ENCODE measurements at regions of chr6 and their contacts with region 1.

Region 1: DNA sequence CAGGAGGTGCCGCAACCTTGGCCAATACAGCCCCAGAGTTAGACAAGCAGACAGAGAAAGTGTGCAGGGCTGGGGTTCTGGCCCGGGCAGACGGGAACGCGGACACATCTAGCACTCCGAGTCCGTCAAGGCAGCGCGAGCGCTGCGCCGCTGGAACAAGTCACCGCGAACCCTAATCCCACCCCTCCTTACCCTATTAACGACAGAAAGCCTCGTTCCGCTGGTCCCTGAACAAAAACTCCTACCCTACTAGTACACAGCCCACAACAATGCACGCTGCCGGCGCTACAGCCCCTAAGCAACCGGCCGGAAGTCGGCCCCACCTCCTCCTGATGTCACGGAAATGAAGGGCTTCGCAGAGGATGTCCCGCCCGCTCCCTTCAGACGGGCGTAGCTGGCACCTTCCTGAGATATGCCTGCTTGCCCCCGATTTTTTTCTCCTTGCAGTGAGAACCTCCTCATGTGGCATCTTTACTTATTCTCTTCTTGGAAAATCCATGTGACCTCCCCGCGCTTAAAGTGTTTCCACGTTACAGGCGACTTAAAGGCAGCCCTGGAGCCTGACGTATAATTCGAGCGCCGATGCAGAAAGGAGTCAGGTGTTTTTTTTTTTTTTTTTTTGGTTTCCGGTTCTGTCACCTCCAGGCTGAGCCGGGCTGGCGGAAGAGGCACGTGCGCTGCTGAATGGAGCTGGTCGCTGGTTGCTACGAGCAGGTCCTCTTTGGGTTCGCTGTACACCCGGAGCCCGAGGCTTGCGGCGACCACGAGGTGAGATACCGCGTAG is at the starts of genes C6orf52 and PAK1IP1:
- DNase-seq: peak; percentile 79 to 90
- H3K4me3 ChIP-seq: peak within 1 kb of the TSS; percentile 98
- H3K27ac ChIP-seq: peak within 1 kb of the TSS; percentile 86
- H3K4me1 ChIP-seq: peaks cover 16% of the 10 kb centered on the region
- H3K27me3 ChIP-seq: no peaks in the 10 kb centered on the region
- CTCF ChIP-seq: no peak
- total RNA-seq, gene C6orf52: 6.1 and 6.2 TPM in 2 replicates
- total RNA-seq, gene PAK1IP1: 14.3 and 15.2 TPM in 2 replicates

Region 2: GRCh38 chr6:10082385-10082784 is 612.1 kb before region 1 on chr6:
- CTCF ChIA-PET with region 1: no interaction called
- POLR2A ChIA-PET with region 1: interaction called, 11 read pairs
- intact Hi-C with region 1: no loop called
- DNase-seq: no peak
- H3K4me3 ChIP-seq: no peak overlapping the region
- H3K27ac ChIP-seq: no peak overlapping the region
- H3K4me1 ChIP-seq: no peaks in the 10 kb centered on the region
- H3K27me3 ChIP-seq: no peaks in the 10 kb centered on the region
- CTCF ChIP-seq: no peak

Region 3: DNA sequence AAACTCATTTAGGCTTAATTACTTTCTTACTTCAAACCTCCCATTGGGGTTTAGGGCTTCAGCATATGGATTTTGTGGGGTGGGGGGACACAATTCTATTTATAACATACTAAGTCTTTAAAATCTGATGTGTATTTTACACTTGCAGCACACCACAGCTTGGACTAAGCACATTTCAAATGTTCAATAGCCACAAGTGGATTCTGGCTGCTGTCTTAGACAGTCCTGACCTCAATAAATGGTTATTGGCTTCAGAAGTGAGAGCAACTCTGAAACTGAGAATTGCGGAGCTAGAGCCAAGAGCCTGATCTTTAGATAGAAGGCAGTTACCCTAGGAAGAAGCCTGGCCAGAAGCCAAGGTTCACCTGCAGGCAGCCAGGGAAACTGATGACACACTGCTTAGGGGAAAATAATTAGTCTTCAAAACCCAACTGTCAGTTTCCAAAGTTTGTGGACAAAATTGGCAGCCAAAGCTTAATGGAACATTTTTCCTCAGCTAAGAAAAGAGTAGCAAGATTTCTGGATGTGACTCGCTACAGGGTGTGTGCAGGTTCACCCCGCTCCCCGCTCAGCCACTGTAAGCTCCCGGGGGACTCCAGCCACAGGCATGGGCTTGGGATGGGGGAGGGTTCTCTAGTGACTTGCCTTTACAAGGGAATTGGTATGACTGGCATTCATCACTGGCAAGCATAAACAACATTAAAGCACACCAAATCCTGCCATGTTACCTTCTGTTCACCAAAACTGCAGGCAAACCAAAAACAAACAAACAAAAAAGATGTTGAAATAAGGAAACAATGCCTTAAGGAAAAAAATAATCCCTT is 499.5 kb before region 1 on chr6:
- CTCF ChIA-PET with region 1: no interaction called
- POLR2A ChIA-PET with region 1: no interaction called
- intact Hi-C with region 1: no loop called
- DNase-seq: peak; percentile 37 to 75
- H3K4me3 ChIP-seq: no peak overlapping the region
- H3K27ac ChIP-seq: peak overlapping the region; percentile 22; the same call in 1 of the 2 replicates
- H3K4me1 ChIP-seq: peaks cover 20% of the 10 kb centered on the region
- H3K27me3 ChIP-seq: no peaks in the 10 kb centered on the region
- CTCF ChIP-seq: no peak

Region 4: GRCh38 chr6:10487668-10488327 is 206.7 kb before region 1 on chr6:
- CTCF ChIA-PET with region 1: no interaction called
- POLR2A ChIA-PET with region 1: no interaction called
- intact Hi-C with region 1: loop called (anchors 10 kb)
- DNase-seq: no peak
- H3K4me3 ChIP-seq: no peak overlapping the region
- H3K27ac ChIP-seq: no peak overlapping the region
- H3K4me1 ChIP-seq: no peaks in the 10 kb centered on the region
- H3K27me3 ChIP-seq: no peaks in the 10 kb centered on the region
- CTCF ChIP-seq: no peak

Region 5: DNA sequence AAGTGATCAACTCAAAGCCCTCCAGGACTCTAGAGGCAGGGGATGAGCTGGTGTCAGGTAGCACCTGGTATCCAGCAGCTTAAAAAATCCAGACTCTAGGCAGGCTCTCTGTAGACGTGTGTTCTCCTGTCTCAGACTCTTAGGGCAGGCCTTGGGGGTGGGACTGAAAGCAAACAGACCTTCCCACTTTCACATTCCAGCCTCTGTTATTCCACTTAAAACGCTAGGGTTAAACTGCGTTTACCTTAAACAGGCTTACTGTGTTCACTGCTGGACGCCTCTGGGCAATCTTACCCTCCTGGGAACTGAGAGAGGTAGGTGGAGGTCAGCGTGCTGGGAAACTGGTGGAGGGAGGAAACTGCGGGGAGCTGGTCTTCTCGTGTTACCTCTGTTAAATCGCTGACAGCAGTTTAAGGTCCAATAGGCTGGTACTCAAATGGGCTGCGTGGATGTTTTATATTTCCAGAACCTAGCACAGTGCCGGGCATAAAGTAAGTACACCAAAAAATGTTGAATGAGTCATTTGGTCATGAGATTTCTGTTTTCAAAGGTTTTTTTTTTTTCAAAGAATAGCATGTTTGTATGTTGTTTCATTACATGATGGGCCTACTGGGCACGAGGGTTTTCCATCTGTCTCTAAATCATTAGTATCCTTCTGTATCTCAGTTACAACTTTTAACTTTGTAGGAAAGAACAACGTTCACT is 173.2 kb before region 1 on chr6 and contains the start of gene GCNT2:
- CTCF ChIA-PET with region 1: no interaction called
- POLR2A ChIA-PET with region 1: no interaction called
- intact Hi-C with region 1: loop called (anchors 2 kb)
- DNase-seq: peak; percentile 80 to 92
- H3K4me3 ChIP-seq: peak within 1 kb of the TSS; percentile 46; the same call in 1 of the 2 replicates
- H3K27ac ChIP-seq: peak within 1 kb of the TSS; percentile 99
- H3K4me1 ChIP-seq: peaks cover 42% of the 10 kb centered on the region
- H3K27me3 ChIP-seq: no peaks in the 10 kb centered on the region
- CTCF ChIP-seq: no peak
- total RNA-seq, gene GCNT2: 28.4 and 35.7 TPM in 2 replicates

Region 6: GRCh38 chr6:10542213-10542612 is 152.3 kb before region 1 on chr6:
- CTCF ChIA-PET with region 1: interaction called, 10 read pairs
- POLR2A ChIA-PET with region 1: no interaction called
- intact Hi-C with region 1: no loop called
- DNase-seq: no peak
- H3K4me3 ChIP-seq: no peak overlapping the region
- H3K27ac ChIP-seq: no peak overlapping the region
- H3K4me1 ChIP-seq: no peaks in the 10 kb centered on the region
- H3K27me3 ChIP-seq: no peaks in the 10 kb centered on the region
- CTCF ChIP-seq: no peak

Region 7: DNA sequence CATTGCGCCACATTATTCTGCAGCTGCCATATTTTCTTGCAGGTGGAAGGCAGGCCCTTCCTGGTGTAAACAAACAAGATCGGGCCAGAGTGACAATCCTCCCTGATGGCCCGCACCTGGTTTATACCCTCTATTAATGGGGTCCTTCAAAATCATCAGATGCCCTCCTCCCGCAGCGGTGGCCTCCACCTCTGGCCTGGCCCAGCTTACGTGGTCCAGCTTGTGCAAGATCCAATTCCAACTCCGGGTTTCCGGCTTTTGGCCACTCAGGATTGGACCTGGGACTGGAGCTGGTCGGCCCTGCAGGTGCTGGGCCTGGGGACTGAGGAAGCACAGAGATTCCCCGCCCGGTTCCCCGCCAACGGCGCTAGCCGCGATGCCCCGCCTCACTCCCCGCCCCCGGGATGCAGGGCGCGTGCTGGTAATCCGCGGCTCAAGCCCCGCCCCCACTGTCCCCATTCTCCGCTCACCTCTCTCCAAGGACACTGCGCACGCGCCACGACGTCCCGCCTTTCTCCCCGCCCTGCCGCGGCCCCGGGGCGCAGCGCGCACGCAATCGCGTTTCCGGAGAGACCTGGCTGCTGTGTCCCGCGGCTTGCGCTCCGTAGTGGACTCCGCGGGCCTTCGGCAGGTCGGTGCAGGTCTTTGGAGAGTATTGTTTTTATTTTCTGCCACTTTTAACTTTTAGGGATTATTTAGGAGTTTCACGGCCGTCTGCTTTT is 52.9 kb after region 1 on chr6 and contains the start of gene TMEM14B:
- CTCF ChIA-PET with region 1: interaction called, 8 read pairs
- POLR2A ChIA-PET with region 1: interaction called, 3 read pairs
- intact Hi-C with region 1: loop called (anchors 2 kb)
- DNase-seq: peak; percentile 78 to 100
- H3K4me3 ChIP-seq: peak within 1 kb of the TSS; percentile 96
- H3K27ac ChIP-seq: peak within 1 kb of the TSS; percentile 53
- H3K4me1 ChIP-seq: peaks cover 13% of the 10 kb centered on the region; the same call in 1 of the 2 replicates
- H3K27me3 ChIP-seq: no peaks in the 10 kb centered on the region
- CTCF ChIP-seq: no peak
- total RNA-seq, gene TMEM14B: 139 and 168 TPM in 2 replicates

Region 8: DNA sequence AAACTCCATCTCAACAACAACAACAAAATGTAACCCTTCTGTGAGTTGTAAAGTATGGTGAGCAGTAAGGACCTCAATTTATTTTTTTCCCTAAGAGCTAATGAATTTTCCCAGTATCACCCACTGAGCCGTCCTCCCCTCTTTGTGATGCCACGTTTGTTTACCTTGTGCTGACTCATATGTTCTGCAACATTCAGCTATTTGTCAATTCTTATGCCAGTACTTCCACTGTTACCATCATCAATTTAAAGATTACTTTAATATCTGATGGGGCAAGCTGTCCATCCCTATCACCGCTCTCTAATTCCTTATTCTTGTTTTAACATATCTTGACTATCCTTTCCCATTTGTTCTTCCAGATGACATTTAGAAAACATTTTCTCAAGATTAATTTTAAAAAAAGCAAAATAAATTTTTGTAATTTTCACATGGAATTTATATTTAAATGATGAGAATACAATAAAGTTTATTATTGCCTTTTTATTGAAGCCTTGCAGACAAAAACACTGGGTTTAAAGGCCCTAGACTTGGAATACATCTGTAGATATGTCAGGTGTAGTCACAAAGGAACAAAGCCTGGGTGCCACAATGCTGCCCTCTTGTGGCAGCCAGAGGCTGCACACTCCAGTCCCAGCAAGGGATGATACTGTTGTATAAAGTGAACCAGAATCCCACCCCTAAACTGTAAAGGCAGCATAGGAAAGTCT is 106.5 kb after region 1 on chr6:
- CTCF ChIA-PET with region 1: no interaction called
- POLR2A ChIA-PET with region 1: no interaction called
- intact Hi-C with region 1: loop called (anchors 5 kb)
- DNase-seq: peak; percentile 66 to 70
- H3K4me3 ChIP-seq: no peak overlapping the region
- H3K27ac ChIP-seq: peak overlapping the region; percentile 41; the same call in 1 of the 2 replicates
- H3K4me1 ChIP-seq: peaks cover 8% of the 10 kb centered on the region
- H3K27me3 ChIP-seq: no peaks in the 10 kb centered on the region
- CTCF ChIP-seq: peak; percentile 94

Measured in PC-9 (cell line).